PC-3 (cell line): ENCODE measurements at regions of chr1 and their contacts with region 1.

Region 1: GRCh38 chr1:87953732-87954344 is 625.2 kb downstream of the LMO4 start:
- DNase-seq: peak; percentile 79
- ATAC-seq: peak; percentile 60
- H3K4me3 ChIP-seq: no peak overlapping the region
- H3K27ac ChIP-seq: no peak overlapping the region
- H3K4me1 ChIP-seq: peaks cover 28% of the 10 kb centered on the region
- H3K27me3 ChIP-seq: no peaks in the 10 kb centered on the region
- CTCF ChIP-seq: peak; percentile 92

Region 2: GRCh38 chr1:87292684-87293493 is 660.9 kb before region 1 on chr1:
- CTCF ChIA-PET with region 1: no interaction called
- POLR2A ChIA-PET with region 1: no interaction called
- intact Hi-C with region 1: loop called (anchors 2 kb)
- DNase-seq: peak; percentile 75
- ATAC-seq: peak; percentile 70
- H3K4me3 ChIP-seq: no peak overlapping the region
- H3K27ac ChIP-seq: no peak overlapping the region
- H3K4me1 ChIP-seq: no peaks in the 10 kb centered on the region
- H3K27me3 ChIP-seq: no peaks in the 10 kb centered on the region
- CTCF ChIP-seq: peak; percentile 91

Region 3: DNA sequence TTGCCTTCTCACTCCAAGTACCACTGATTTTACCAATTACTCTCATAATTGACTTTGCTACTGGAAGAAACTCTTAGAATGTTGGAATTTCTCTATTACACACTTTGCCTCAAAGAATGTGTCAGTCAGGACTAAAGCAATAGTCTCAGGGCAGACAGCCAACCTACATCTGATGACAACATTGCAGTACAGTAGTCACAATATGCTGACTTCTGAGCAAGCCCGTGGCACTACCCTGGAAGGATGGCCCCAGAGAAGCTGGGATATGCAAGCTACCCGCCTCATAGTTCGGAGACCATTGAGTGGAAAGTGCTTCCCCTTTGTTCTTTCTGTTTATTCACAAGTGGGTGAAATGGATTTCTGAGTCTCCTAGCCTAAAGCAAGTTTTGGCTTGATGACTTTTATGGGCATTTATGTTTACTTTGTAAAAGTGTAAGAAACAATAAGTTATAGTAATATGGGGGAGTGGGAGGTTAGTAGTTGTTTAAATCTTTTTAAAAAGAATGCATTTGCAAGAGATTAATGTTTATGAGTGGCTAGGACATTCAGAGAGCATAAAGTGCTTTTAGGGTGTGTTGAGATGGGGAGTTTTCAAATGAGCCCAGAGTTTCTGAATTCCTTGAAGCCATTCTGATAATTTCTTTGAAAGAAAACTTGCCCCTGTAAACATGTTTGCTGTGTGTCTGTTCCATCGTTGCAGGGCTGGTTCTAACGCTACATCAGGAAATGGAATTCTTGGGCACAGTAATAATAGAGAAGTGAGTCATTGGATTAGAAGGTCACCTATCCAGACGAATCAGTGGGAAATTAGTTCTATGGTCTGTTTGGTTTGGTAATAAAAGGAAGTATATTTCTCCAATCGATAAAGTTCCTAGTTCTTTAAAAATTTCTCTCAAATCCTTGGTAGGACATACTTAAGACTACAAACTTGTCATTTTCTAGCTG is 561.3 kb before region 1 on chr1:
- CTCF ChIA-PET with region 1: no interaction called
- POLR2A ChIA-PET with region 1: no interaction called
- intact Hi-C with region 1: loop called (anchors 10 kb)
- DNase-seq: peak; percentile 89
- ATAC-seq: peak; percentile 92
- H3K4me3 ChIP-seq: peak overlapping the region; percentile 42
- H3K27ac ChIP-seq: peak overlapping the region; percentile 82
- H3K4me1 ChIP-seq: peaks cover 21% of the 10 kb centered on the region
- H3K27me3 ChIP-seq: no peaks in the 10 kb centered on the region
- CTCF ChIP-seq: no peak; the same call in 1 of the 2 replicates

Region 4: DNA sequence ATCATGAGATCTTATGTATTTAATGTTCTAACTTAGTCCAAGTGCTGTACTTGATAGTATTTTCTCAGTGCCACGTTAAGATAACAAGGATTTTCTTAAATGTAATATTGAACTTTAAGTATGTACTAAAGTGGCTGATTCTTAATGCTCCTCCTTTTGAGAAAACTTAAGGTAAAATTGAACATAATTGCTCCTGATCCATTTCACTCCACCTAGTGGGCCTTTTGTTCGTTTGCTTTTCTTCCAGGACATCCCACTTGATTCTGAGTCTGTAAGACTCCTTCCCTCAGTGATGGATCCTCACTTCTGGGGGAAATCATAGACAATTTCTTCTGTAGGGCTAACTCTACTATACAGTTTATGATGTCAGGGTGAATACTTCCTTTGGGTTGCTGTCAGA is 452.1 kb before region 1 on chr1:
- CTCF ChIA-PET with region 1: no interaction called
- POLR2A ChIA-PET with region 1: no interaction called
- intact Hi-C with region 1: loop called (anchors 10 kb)
- DNase-seq: peak; percentile 18
- ATAC-seq: peak; percentile 32; the same call in 1 of the 2 replicates
- H3K4me3 ChIP-seq: no peak overlapping the region
- H3K27ac ChIP-seq: no peak overlapping the region
- H3K4me1 ChIP-seq: peaks cover 9% of the 10 kb centered on the region; the same call in 1 of the 2 replicates
- H3K27me3 ChIP-seq: no peaks in the 10 kb centered on the region
- CTCF ChIP-seq: peak; percentile 47; the same call in 1 of the 2 replicates

Region 5: GRCh38 chr1:87718241-87718950 is 235.4 kb before region 1 on chr1:
- CTCF ChIA-PET with region 1: no interaction called
- POLR2A ChIA-PET with region 1: interaction called, 5 read pairs
- intact Hi-C with region 1: loop called (anchors 1 kb)
- DNase-seq: peak; percentile 38
- ATAC-seq: peak; percentile 72
- H3K4me3 ChIP-seq: no peak overlapping the region
- H3K27ac ChIP-seq: no peak overlapping the region
- H3K4me1 ChIP-seq: peaks cover 16% of the 10 kb centered on the region; the same call in 1 of the 2 replicates
- H3K27me3 ChIP-seq: no peaks in the 10 kb centered on the region
- CTCF ChIP-seq: no peak

Region 6: GRCh38 chr1:88061492-88062177 is 107.8 kb after region 1 on chr1:
- CTCF ChIA-PET with region 1: interaction called, 3 read pairs
- POLR2A ChIA-PET with region 1: no interaction called
- intact Hi-C with region 1: loop called (anchors 5 kb)
- DNase-seq: peak; percentile 84
- ATAC-seq: peak; percentile 89
- H3K4me3 ChIP-seq: no peak overlapping the region
- H3K27ac ChIP-seq: no peak overlapping the region
- H3K4me1 ChIP-seq: peaks cover 27% of the 10 kb centered on the region
- H3K27me3 ChIP-seq: no peaks in the 10 kb centered on the region
- CTCF ChIP-seq: peak; percentile 95